Motor neuron (in vitro differentiated cells): ENCODE measurements at regions of chr13 and their contacts with region 1.

Region 1: DNA sequence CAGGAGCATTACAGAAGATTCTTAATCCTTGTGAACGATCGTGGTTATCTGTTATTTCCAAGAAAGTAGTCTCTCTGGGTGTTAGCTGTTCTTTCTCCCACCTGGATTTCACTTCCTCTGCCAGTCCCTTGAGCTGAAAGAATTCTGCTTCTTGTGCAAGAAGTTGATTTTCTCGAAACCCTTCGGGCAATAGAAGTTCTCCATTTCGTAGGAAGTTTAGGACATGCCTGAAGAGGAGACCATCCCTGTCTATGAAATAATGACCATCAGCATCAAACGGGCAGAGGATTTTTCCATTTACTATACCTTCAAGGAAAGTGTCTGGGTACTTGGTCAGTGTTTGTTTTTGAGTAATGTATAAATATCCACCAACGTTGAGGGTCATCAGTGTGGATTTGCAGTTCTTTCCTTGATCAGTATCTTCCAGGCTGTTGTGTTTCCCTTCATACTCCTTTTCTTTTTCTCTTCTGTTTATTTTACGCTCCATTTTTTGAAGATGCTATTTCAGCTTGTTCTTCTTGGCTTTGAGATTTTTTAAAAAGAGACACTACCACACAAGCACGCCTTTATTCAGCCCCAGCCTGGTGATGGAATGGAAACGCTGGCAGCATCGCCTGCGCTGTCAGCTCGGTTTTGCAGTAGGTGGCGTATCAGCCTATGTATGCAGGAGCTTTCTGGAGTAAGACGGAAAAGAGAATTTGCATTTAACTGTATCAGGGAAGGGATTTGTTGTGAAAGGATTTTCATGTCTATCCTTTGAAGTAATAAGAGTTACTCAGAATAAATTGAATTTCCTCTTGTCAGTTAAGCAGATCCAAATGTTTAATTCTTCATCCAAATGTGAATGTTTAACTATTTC is 6.5 kb downstream of the KCTD4 start:
- ATAC-seq: peak; percentile 36 to 99 (median 60)
- H3K4me3 ChIP-seq: no peak overlapping the region
- H3K27ac ChIP-seq: no peak overlapping the region
- H3K4me1 ChIP-seq: peaks cover 0 to 3% of the 10 kb centered on the region in 2 donors

Region 2: GRCh38 chr13:44410346-44410859 is 783.9 kb before region 1 on chr13:
- in situ Hi-C with region 1: no loop called
- ATAC-seq: peak in 1 of 8 experiments; percentile 63
- H3K4me3 ChIP-seq: no peak overlapping the region
- H3K27ac ChIP-seq: no peak overlapping the region
- H3K4me1 ChIP-seq: peaks cover 13 to 21% of the 10 kb centered on the region in 2 donors

Region 3: GRCh38 chr13:45280751-45281634 is 86.7 kb after region 1 on chr13:
- in situ Hi-C with region 1: loop called in 1 of 9 experiments (anchors 25 kb)
- ATAC-seq: peak; percentile 50 to 100 (median 88)
- H3K4me3 ChIP-seq: no peak overlapping the region
- H3K27ac ChIP-seq: no peak overlapping the region
- H3K4me1 ChIP-seq: no peaks in the 10 kb centered on the region